ENCODE measurements at regions of chr11 and their contacts with region 1.

Region 1: DNA sequence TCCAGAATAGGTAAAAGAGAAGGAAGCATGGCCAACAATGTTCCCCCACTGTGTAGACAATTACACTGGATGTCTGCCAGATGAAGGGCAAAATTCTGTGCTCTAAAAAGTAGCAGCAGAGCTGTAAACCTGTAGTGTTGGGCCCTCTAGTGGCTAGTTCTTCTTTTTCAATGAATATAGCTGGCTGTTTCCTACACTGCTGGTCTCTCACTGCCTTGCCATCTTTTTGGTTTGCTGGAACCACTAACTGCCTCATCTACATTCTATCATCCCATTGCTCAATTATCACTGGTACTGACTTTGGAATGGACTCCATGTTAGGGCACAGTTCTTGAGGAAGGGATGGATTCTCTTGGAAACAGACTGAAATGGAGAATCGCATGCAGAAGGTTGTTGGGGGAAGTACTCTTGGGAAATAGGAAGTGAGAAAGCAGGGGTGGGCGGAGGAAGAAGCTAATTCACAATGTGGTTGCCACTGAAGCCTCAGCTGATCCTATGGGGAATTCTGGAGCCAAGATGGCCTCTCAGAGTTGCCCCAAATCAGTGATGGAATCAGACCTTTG is 17.9 kb downstream of the KCNE3 start:
- DNase-seq: peak; percentile 12
- H3K4me3 Mint-ChIP-seq: no peak overlapping the region
- H3K27ac Mint-ChIP-seq: no peak overlapping the region
- H3K4me1 Mint-ChIP-seq: peaks cover 7% of the 10 kb centered on the region
- H3K27me3 Mint-ChIP-seq: peaks cover 12% of the 10 kb centered on the region

Region 2: GRCh38 chr11:73963861-73964260 is 485.6 kb before region 1 on chr11:
- intact Hi-C with region 1: loop called (anchors 1 kb)
- DNase-seq: no peak
- H3K4me3 Mint-ChIP-seq: no peak overlapping the region
- H3K27ac Mint-ChIP-seq: peak overlapping the region; percentile 78
- H3K4me1 Mint-ChIP-seq: peaks cover 28% of the 10 kb centered on the region
- H3K27me3 Mint-ChIP-seq: peaks cover 2% of the 10 kb centered on the region

Region 3: GRCh38 chr11:74388678-74389327 is 60.6 kb before region 1 on chr11:
- intact Hi-C with region 1: loop called (anchors 1 kb)
- DNase-seq: peak; percentile 33
- H3K4me3 Mint-ChIP-seq: no peak overlapping the region
- H3K27ac Mint-ChIP-seq: peak overlapping the region; percentile 19
- H3K4me1 Mint-ChIP-seq: peaks cover 28% of the 10 kb centered on the region
- H3K27me3 Mint-ChIP-seq: no peaks in the 10 kb centered on the region

Region 4: DNA sequence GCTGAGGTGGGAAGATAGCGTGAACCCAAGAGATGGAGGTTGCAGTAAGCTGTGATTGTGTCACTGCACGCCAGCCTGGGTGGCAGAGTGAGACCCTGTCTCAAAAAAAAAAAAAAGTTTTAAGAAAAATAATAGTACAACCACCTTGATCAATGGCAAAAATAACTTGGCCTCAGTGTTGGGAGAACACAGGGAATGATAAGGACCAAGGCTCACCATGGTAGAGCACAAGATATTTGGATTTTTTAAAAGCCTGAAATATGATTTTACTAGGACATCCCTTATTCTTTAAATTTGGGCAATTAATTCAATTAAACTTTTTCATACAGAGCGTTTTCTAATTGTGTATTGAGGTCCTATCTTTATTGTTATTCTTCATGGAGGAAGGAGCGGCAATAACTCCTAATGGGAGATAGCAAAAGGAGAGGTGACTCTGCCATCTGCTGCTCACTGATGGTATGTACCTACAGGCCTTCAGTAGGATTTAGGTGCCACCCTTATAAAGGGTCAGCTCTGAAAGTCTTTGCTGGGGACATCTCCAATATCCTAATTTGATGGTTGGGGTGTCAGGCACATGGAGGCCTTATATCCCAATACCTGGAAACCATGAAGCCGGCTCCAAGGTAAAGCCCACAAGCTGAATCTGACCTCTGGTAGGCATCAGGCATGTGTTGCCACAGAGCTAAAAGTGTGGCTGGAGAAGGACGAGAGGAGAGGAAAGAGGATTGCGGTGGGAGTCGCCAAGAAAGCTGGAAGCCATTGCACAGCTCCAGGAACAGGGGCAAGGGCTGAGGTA is 121.0 kb after region 1 on chr11:
- intact Hi-C with region 1: loop called (anchors 1 kb)
- DNase-seq: no peak
- H3K4me3 Mint-ChIP-seq: no peak overlapping the region
- H3K27ac Mint-ChIP-seq: no peak overlapping the region
- H3K4me1 Mint-ChIP-seq: no peaks in the 10 kb centered on the region
- H3K27me3 Mint-ChIP-seq: peaks cover 2% of the 10 kb centered on the region

Region 5: GRCh38 chr11:74672956-74673692 is 223.7 kb after region 1 on chr11:
- intact Hi-C with region 1: no loop called
- DNase-seq: no peak
- H3K4me3 Mint-ChIP-seq: no peak overlapping the region
- H3K27ac Mint-ChIP-seq: no peak overlapping the region
- H3K4me1 Mint-ChIP-seq: no peaks in the 10 kb centered on the region
- H3K27me3 Mint-ChIP-seq: no peaks in the 10 kb centered on the region

Region 6: GRCh38 chr11:74870485-74870884 is 421.0 kb after region 1 on chr11:
- intact Hi-C with region 1: loop called (anchors 2 kb)
- DNase-seq: no peak
- H3K4me3 Mint-ChIP-seq: no peak overlapping the region
- H3K27ac Mint-ChIP-seq: no peak overlapping the region
- H3K4me1 Mint-ChIP-seq: no peaks in the 10 kb centered on the region
- H3K27me3 Mint-ChIP-seq: no peaks in the 10 kb centered on the region